PC-3 (cell line): ENCODE measurements at regions of chr15 and their contacts with region 1.

Region 1: DNA sequence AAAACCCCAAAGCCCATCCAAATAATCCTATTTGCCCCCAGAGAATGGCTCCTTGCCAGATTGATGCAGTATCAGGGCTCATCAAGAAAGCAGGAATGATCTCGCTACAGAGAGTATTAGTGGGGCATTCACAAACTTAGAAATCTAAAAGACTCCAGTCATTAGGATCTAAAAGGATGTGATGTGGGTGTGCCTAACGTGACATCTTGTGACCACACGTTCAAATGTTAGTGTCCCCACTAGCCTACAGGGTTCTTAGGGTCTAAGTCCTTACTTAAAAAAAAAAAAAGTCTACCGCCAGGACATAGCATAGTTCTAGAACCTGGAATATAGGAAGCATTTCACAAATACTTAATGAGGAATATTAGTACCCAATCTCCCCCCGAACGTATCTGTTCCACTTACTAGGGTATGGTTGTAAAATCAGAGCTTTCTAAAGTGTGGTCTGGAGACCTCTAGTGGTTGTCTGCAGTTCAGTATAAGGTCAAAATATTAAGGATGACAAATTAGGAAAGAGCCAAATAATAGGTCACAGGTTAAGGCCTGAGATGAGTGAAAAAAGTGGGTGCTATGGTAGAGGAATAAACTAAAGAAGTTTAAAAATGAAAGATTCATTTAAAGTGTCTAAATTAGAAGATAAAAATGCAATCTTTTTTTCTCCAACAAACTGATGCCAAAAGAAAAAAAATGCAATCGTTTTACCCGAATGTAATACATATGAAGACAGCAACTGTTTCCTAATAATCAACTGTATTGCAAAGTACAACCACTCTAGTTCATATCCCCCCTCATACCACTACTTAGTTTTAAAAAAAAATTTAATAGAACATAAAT is 4.2 kb upstream of the CHRM5 start:
- DNase-seq: peak; percentile 68
- ATAC-seq: peak; percentile 80
- H3K4me3 ChIP-seq: no peak overlapping the region
- H3K27ac ChIP-seq: no peak overlapping the region
- H3K4me1 ChIP-seq: peaks cover 17% of the 10 kb centered on the region
- H3K27me3 ChIP-seq: no peaks in the 10 kb centered on the region
- CTCF ChIP-seq: peak; percentile 93

Region 2: GRCh38 chr15:33654860-33655259 is 309.2 kb before region 1 on chr15:
- CTCF ChIA-PET with region 1: no interaction called
- POLR2A ChIA-PET with region 1: no interaction called
- intact Hi-C with region 1: no loop called
- DNase-seq: no peak
- ATAC-seq: no peak; the same call in 1 of the 2 replicates
- H3K4me3 ChIP-seq: no peak overlapping the region
- H3K27ac ChIP-seq: no peak overlapping the region
- H3K4me1 ChIP-seq: no peaks in the 10 kb centered on the region
- H3K27me3 ChIP-seq: peaks cover 79% of the 10 kb centered on the region
- CTCF ChIP-seq: peak; percentile 19; the same call in 1 of the 2 replicates

Region 3: GRCh38 chr15:33822479-33822878 is 141.6 kb before region 1 on chr15:
- CTCF ChIA-PET with region 1: no interaction called
- POLR2A ChIA-PET with region 1: no interaction called
- intact Hi-C with region 1: loop called (anchors 5 kb)
- DNase-seq: no peak
- ATAC-seq: peak; percentile 55
- H3K4me3 ChIP-seq: no peak overlapping the region
- H3K27ac ChIP-seq: no peak overlapping the region
- H3K4me1 ChIP-seq: no peaks in the 10 kb centered on the region
- H3K27me3 ChIP-seq: peaks cover 72% of the 10 kb centered on the region
- CTCF ChIP-seq: no peak

Region 4: DNA sequence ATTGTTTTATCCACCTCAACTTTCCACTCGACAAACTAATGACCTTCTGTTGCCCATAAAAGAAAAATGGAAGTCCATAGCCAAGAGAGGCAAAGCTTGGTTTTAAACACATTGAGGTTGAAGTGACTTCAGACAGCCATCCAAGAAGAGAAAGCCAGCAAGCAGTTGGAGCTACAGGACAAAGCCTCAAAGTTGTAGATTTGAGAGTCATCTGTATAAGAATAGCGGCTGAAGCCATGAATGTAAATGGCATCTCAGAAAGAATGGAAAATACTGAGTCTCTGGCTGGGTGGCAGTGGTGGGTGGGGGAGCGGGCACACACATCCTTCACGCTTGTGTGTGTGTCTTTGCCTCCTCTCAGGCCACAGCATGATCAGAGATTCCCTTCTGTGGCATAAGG is 119.9 kb before region 1 on chr15:
- CTCF ChIA-PET with region 1: no interaction called
- POLR2A ChIA-PET with region 1: no interaction called
- intact Hi-C with region 1: no loop called
- DNase-seq: no peak
- ATAC-seq: peak; percentile 21
- H3K4me3 ChIP-seq: no peak overlapping the region
- H3K27ac ChIP-seq: no peak overlapping the region
- H3K4me1 ChIP-seq: peaks cover 14% of the 10 kb centered on the region
- H3K27me3 ChIP-seq: no peaks in the 10 kb centered on the region
- CTCF ChIP-seq: no peak

Region 5: DNA sequence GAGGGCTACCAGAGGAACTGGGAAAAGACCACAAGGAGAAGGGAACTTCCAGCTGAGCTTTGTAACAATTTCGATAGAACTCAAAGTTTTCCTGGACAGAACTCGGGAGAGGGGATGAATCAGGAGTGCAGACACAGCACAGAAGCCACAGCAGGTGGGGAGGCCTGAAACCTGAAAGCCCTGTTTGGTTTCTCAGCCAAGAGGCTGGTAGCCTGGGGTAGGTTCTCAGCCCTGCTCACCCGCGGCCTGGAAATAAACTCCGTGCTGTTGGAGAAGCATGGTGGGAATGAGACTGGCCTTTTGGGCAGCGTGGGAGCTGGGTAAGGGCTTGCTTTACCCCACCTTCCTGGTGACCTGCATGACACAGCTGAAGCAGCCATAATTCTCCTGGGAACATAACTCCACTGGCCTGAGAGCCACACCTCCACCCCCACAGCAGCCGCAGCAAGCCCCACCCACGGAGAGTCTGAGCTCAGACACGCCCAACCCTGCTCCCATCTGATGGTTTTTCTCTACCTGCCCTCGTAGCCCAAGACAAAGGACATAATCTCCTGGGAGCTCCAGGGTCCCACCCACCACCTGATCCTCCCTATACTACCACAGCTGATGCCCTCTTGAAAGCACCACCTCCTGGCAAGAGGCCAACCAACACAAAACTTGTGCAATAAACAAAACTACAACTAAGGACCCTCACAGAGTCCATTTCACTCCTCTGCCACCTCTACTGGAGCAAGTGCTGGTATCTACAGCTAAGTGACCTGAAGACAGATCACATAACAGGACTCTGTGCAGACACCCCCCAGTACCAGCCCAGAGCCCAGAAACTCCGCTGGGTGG is 48.3 kb before region 1 on chr15:
- CTCF ChIA-PET with region 1: no interaction called
- POLR2A ChIA-PET with region 1: no interaction called
- intact Hi-C with region 1: no loop called
- DNase-seq: no peak
- ATAC-seq: no peak
- H3K4me3 ChIP-seq: no peak overlapping the region
- H3K27ac ChIP-seq: no peak overlapping the region
- H3K4me1 ChIP-seq: peaks cover 15% of the 10 kb centered on the region
- H3K27me3 ChIP-seq: no peaks in the 10 kb centered on the region
- CTCF ChIP-seq: no peak

Region 6: DNA sequence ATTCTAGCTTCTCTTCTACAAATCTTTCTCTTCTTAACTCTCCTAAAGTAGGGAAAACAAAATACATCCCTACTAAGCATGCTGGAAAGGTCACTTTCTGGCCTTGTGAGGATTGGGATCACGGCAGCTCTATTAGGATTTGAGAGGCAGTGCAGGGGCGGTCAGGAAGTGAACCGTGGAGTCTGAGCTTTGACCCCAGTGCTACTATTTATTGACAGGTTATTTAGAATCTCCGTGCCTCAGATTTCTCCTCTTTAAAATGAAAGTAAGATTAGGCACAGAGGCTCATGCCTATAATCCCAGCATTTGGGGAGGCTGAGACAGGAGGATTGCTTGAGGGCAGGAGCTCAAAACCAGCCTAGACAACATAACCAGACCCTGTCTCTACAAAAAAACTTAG is 37.8 kb before region 1 on chr15:
- CTCF ChIA-PET with region 1: no interaction called
- POLR2A ChIA-PET with region 1: no interaction called
- intact Hi-C with region 1: no loop called
- DNase-seq: no peak
- ATAC-seq: no peak
- H3K4me3 ChIP-seq: no peak overlapping the region
- H3K27ac ChIP-seq: no peak overlapping the region
- H3K4me1 ChIP-seq: no peaks in the 10 kb centered on the region
- H3K27me3 ChIP-seq: no peaks in the 10 kb centered on the region
- CTCF ChIP-seq: no peak